ENCODE measurements at regions of chr12 and their contacts with region 1.

Region 1: GRCh38 chr12:125065021-125065795 is at the start of gene AACS:
- DNase-seq: peak; percentile 76
- H3K4me3 Mint-ChIP-seq: peak within 1 kb of the TSS; percentile 78
- H3K27ac Mint-ChIP-seq: no peak within 1 kb of the TSS
- H3K4me1 Mint-ChIP-seq: peaks cover 11% of the 10 kb centered on the region
- H3K27me3 Mint-ChIP-seq: no peaks in the 10 kb centered on the region
- total RNA-seq, gene AACS: 10.6 to 11.2 TPM

Region 2: DNA sequence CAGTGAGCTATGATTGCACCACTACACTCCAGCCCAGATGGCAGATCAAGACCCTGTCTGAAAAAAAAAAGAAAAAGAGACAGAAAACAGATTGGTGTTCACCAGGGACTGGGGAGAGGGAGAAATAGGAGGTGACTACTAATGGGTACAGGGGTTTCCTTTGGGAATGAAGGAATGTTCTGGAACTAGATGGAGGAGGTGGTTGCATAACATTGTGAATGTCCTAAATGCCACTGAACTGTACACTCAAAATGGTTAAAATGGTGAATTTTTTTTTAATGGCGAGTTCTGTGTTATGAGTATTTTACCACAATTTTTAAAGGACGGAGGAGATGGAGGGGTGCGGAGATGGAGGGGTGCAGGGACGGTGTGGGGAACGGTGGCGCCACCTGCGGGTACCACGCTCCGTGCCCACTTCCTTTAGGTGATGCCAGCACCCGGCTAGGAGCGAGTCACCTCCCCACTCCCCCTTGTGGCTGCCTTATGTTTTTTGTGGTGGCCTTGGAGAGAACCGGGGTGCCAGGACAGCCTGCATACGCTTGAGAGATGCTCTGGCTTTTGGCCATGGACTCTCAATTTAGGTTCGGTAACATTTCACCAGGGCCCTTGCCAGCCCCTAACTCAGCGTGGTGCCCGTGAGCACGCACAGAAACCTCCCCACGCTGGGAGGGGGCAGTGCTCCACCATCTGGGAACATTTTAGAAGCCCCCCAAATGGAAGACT is 166.8 kb before region 1 on chr12:
- CTCF ChIA-PET with region 1: no interaction called
- intact Hi-C with region 1: no loop called
- DNase-seq: peak; percentile 82
- H3K4me3 Mint-ChIP-seq: peak overlapping the region; percentile 34
- H3K27ac Mint-ChIP-seq: no peak overlapping the region
- H3K4me1 Mint-ChIP-seq: peaks cover 12% of the 10 kb centered on the region
- H3K27me3 Mint-ChIP-seq: no peaks in the 10 kb centered on the region

Region 3: DNA sequence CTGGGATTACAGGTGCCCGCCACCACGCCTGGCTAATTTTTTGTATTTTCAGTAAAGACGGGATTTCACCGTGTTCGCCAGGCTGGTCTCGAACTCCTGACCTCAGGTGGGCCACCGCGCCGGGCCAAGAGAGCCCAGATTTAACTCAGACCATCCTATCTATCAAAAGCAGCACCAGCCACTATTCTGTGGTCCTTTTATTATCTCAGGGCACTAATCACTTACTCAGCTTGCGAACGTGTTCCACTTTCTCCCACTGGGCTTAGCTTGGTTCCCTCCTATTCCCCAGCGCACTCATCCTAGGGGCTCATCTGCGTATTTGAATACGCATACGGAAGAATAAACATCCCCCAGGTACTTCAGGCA is 16.1 kb before region 1 on chr12:
- CTCF ChIA-PET with region 1: no interaction called
- intact Hi-C with region 1: loop called (anchors 1 kb)
- DNase-seq: no peak
- H3K4me3 Mint-ChIP-seq: peak overlapping the region; percentile 83
- H3K27ac Mint-ChIP-seq: no peak overlapping the region
- H3K4me1 Mint-ChIP-seq: peaks cover 7% of the 10 kb centered on the region
- H3K27me3 Mint-ChIP-seq: no peaks in the 10 kb centered on the region

Measured in activated naive CD4-positive, alpha-beta T cell treated with anti-CD3 and anti-CD28 coated beads for 36 hours (primary cell).